Pancreas (tissue), 10 donors: ENCODE measurements at regions of chr17 and their contacts with region 1.

Region 1: GRCh38 chr17:13594762-13595598 is 6.7 kb downstream of the HS3ST3A1 start:
- DNase-seq: peak in 5 of 6 donors; percentile 47 to 76 (median 59)
- ATAC-seq: peak; percentile 58 to 89 (median 86)
- H3K4me3 ChIP-seq: no peak overlapping the region
- H3K27ac ChIP-seq: no peak overlapping the region
- H3K4me1 ChIP-seq: no peaks in the 10 kb centered on the region
- H3K27me3 ChIP-seq: peaks cover 0 to 22% (median 0%) of the 10 kb centered on the region in 4 donors
- CTCF ChIP-seq: peak; percentile 71 to 92 (median 86)

Region 2: DNA sequence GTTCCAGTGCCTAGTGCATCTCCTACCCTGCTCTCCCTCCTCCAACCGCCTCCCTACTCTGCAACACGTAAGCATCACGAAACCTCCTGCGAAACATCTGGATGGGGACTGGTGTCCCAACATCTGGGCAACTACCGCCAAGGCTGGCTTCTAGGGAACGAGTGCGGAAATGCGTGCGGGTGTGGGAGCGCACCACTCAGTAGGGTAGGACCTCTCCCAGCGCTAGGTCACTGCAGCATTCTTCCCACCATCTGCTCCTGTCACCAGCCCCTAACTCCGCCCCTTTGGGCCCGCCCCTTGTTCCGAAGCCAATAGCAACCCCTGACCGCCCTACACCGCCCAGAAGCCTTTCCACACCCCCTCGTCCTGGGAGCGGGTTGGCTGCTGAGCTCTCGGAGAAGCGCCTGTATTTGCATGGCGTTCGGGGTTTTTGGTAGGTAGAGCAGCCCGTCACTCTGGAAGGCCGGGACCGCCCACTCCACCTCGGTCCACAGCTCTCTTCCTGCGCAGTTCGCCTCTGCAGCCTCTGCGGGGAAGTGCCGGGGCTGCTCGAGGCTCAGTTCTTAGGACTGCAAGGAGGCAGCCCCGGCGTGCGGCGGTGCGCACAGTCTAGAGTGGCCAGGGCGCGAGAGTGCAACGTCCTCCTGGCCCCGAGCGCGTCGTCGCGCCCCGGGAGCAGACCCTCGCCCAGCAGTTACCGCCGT is 705.7 kb after region 1 on chr17 and contains the start of gene HS3ST3B1:
- intact Hi-C with region 1: loop called in 2 of 3 experiments (anchors 5 kb)
- DNase-seq: peak; percentile 93 to 100 (median 98)
- ATAC-seq: peak; percentile 85 to 89 (median 86)
- H3K4me3 ChIP-seq: peak within 1 kb of the TSS; percentile 28 to 63 (median 42)
- H3K27ac ChIP-seq: peak within 1 kb of the TSS in 3 of 4 donors; percentile 45 to 80 (median 50)
- H3K4me1 ChIP-seq: peaks cover 8 to 15% (median 10%) of the 10 kb centered on the region in 3 donors
- H3K27me3 ChIP-seq: peaks cover 0 to 32% (median 6%) of the 10 kb centered on the region in 4 donors
- CTCF ChIP-seq: no peak
- total RNA-seq, gene HS3ST3B1: 0.59 to 2.8 (median 1.5) TPM

Region 3: DNA sequence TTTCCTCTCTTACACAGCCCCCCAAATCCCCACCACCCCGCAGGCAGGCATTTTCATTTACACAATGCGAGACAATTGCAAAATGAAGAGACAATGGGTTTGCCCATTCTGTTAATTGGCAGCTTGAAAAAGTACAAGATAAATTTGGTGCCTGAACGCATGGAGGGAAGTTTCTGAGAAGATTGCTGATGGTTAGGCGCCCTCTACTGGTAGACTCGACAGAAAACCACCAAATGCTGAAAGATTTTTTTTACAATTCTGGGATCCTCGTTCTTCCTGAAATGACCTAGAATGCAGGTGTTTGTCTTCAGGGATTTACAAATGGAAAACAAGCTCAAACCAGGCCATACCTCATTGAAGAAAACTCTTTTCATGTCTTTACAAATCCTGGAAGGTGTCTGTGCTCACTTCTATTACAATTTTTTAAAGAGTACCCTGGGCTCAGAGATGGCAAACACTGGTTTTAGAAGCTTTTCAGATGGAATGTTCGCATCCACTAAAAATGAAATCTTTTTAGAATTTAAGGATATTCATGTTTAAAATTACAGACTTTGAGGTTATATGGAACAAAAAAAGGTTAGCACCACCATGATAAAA is 1331.6 kb after region 1 on chr17:
- intact Hi-C with region 1: loop called in 1 of 3 experiments (anchors 10 kb)
- DNase-seq: peak in 4 of 6 donors; percentile 21 to 66 (median 48)
- ATAC-seq: peak in 3 of 4 donors; percentile 63 to 78 (median 70)
- H3K4me3 ChIP-seq: no peak overlapping the region
- H3K27ac ChIP-seq: no peak overlapping the region
- H3K4me1 ChIP-seq: peaks cover 0 to 7% (median 0%) of the 10 kb centered on the region in 3 donors
- H3K27me3 ChIP-seq: no peaks in the 10 kb centered on the region
- CTCF ChIP-seq: peak; percentile 36 to 69 (median 56)